Naive thymus-derived CD4-positive, alpha-beta T cell (primary cell): ENCODE measurements at regions of chr20 and their contacts with region 1.

Region 1: DNA sequence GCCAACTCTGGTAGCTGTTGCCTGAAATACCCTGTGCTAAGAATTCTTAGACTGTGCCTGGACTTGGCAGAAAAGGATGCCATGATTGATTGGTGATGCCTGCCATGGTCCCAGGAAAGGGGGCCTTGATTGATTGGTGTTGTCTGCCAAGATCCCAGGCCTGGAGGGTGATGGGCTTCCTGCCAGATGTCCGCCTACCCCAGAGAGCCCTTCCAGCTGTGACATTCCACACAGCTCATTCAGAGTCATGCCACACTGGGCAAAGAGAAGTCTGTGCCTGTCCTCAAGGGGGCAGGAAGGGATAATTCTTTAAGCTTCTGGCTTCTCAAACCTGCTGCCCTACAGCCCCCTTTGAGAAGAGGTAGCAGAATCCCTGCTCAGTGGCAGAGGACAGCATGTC is 24.6 kb downstream of the RIMS4 start:
- DNase-seq: no peak
- ATAC-seq: no peak
- H3K4me3 ChIP-seq: no peak overlapping the region
- H3K4me3 Mint-ChIP-seq: no peak overlapping the region
- H3K27ac ChIP-seq: no peak overlapping the region
- H3K27ac Mint-ChIP-seq: no peak overlapping the region
- H3K4me1 ChIP-seq: no peaks in the 10 kb centered on the region
- H3K4me1 Mint-ChIP-seq: no peaks in the 10 kb centered on the region
- H3K27me3 ChIP-seq: no peaks in the 10 kb centered on the region
- H3K27me3 Mint-ChIP-seq: peaks cover 6 to 36% (median 19%) of the 10 kb centered on the region in 5 donors

Region 2: DNA sequence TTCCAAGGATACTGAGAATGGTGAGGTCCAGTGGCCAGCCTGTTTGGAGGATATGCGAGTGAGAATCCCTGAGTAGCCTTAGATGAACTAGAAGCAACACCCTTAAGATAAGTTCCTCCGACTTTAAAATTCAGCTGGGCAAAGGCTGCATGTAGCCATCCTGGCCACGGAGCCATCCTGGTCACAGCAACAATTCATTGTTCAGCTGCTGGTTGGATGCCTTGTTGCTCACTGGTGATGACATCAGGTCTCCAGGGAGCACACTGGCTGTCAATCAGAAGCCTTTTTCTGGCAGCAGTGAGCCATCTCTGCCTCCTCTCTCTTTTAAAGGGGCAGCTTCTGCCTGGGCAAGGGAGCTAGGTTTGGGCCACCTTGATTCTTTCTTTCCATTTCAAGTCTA is 47.0 kb after region 1 on chr20:
- CTCF ChIA-PET with region 1: no interaction called
- POLR2A ChIA-PET with region 1: no interaction called
- intact Hi-C with region 1: loop called in 1 of 2 experiments (anchors 2 kb)
- DNase-seq: no peak
- ATAC-seq: no peak
- H3K4me3 ChIP-seq: no peak overlapping the region
- H3K4me3 Mint-ChIP-seq: no peak overlapping the region
- H3K27ac ChIP-seq: no peak overlapping the region
- H3K27ac Mint-ChIP-seq: no peak overlapping the region
- H3K4me1 ChIP-seq: no peaks in the 10 kb centered on the region
- H3K4me1 Mint-ChIP-seq: no peaks in the 10 kb centered on the region
- H3K27me3 ChIP-seq: no peaks in the 10 kb centered on the region
- H3K27me3 Mint-ChIP-seq: peaks cover 23 to 45% (median 25%) of the 10 kb centered on the region in 5 donors